ENCODE measurements at regions of chr19 and their contacts with region 1.

Region 1: GRCh38 chr19:19488875-19489690 is 26.3 kb downstream of the TSSK6 start:
- DNase-seq: peak; percentile 63 to 97 (median 94)
- ATAC-seq: peak; percentile 90
- H3K4me3 ChIP-seq: peak overlapping the region; percentile 22
- H3K4me3 Mint-ChIP-seq: peak overlapping the region; percentile 58 to 84 (median 78)
- H3K27ac ChIP-seq: peak overlapping the region; percentile 81
- H3K27ac Mint-ChIP-seq: peak overlapping the region; percentile 96 to 99 (median 99)
- H3K4me1 ChIP-seq: peaks cover 33 to 51% of the 10 kb centered on the region in 2 donors
- H3K4me1 Mint-ChIP-seq: peaks cover 27 to 61% (median 52%) of the 10 kb centered on the region in 7 donors
- H3K27me3 ChIP-seq: no peaks in the 10 kb centered on the region
- H3K27me3 Mint-ChIP-seq: no peaks in the 10 kb centered on the region

Region 2: DNA sequence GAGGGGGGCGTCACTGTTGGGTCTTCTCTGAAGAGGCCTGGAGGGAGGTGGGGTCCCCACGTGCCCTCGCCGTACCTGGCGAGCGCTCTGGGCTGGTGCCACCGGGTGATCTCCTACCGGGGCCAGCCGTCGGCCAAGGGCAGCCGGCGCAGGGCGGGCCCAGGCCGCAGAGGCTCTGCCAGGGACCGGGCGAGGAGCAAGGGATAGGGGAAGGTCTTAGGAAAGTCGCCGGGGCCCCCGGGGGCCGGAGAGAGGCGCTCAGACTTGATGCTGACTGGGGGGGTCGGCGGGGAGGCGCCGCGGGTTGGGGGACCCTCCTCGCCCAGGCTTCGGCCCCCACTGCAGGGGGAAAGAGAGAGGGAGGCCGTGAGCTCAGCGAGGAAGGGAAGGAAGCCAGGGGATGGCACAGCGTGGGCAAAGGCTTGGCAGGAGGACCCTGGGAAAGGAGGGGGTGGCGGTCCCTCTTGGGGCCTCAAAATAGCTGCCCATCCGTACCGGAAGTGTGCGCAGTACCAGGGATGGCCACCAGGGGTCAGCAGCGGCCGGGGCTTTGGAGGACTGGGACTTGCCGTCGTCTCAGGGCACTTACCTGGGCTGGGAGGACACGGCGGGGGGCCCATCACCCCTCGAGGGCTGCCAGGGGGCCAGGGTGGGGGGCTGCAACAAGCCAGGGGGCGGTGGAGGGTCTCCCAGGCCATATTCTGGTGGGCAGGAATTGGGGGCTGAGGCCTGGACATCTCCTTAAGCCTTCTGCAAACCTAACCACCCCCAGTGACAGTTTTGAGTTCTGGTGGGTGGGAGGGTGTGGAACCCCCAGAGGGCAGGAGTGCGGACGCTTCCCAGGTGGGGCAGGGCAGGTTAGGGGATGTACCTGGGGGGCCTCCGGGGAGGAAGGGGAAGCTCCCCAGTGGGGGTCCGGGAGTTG is 343.1 kb before region 1 on chr19:
- CTCF ChIA-PET with region 1: interaction called, 5 read pairs
- POLR2A ChIA-PET with region 1: no interaction called
- intact Hi-C with region 1: loop called in 1 of 2 experiments (anchors 1 kb)
- DNase-seq: peak; percentile 68 to 93 (median 80)
- ATAC-seq: peak; percentile 96
- H3K4me3 ChIP-seq: no peak overlapping the region
- H3K4me3 Mint-ChIP-seq: no peak overlapping the region
- H3K27ac ChIP-seq: no peak overlapping the region
- H3K27ac Mint-ChIP-seq: no peak overlapping the region
- H3K4me1 ChIP-seq: no peaks in the 10 kb centered on the region
- H3K4me1 Mint-ChIP-seq: no peaks in the 10 kb centered on the region
- H3K27me3 ChIP-seq: no peaks in the 10 kb centered on the region
- H3K27me3 Mint-ChIP-seq: no peaks in the 10 kb centered on the region

Region 3: DNA sequence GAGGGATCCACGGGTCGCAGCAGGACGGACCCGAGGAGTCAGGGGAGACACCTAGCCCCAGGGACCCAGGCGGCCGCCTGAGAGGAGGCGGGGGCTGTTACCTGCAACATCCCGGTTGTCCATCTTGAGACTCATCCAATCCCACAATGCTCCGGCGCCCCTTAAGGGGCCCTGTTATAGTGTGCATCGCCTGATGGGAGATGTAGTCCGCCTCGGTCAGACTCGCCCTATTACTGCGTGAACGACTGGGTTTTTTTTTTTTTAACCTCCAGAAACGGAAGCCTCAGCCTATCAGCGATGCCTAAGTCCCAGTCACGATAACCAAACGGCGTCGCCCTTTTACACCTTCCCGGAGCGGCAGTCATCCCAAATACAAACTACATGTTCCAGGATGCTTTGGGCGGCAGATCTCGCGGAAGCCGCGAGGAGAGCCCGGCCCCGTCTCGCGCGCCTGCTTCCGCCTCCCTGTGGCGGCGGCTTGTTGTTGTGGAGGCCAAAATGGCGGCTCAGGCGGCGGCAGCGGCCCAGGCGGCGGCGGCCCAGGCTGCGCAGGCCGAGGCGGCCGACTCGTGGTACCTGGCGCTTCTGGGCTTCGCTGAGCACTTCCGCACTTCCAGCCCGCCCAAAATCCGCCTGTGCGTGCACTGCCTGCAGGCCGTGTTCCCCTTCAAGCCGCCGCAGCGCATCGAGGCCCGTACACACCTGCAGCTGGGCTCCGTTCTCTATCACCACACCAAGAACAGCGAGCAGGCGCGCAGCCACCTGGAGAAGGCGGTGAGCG is 168.5 kb before region 1 on chr19 and contains the starts of genes MAU2 and SUGP1:
- CTCF ChIA-PET with region 1: interaction called, 4 read pairs
- POLR2A ChIA-PET with region 1: no interaction called
- intact Hi-C with region 1: loop called (anchors 1 kb)
- DNase-seq: peak; percentile 78 to 94 (median 91)
- ATAC-seq: peak; percentile 94
- H3K4me3 ChIP-seq: peak within 1 kb of the TSS; percentile 89
- H3K4me3 Mint-ChIP-seq: peak within 1 kb of the TSS; percentile 93 to 100 (median 98)
- H3K27ac ChIP-seq: peak within 1 kb of the TSS; percentile 95
- H3K27ac Mint-ChIP-seq: peak within 1 kb of the TSS; percentile 96 to 100 (median 99)
- H3K4me1 ChIP-seq: peaks cover 23 to 30% of the 10 kb centered on the region in 2 donors
- H3K4me1 Mint-ChIP-seq: peaks cover 20 to 66% (median 44%) of the 10 kb centered on the region in 7 donors
- H3K27me3 ChIP-seq: no peaks in the 10 kb centered on the region
- H3K27me3 Mint-ChIP-seq: no peaks in the 10 kb centered on the region
- total RNA-seq, gene MAU2: 93.7 to 170 (median 136) TPM
- total RNA-seq, gene SUGP1: 59.7 to 96.6 (median 77.5) TPM

Region 4: GRCh38 chr19:19385108-19385899 is 103.8 kb before region 1 on chr19:
- CTCF ChIA-PET with region 1: interaction called, 4 read pairs
- POLR2A ChIA-PET with region 1: interaction called, 7 read pairs
- intact Hi-C with region 1: loop called (anchors 1 kb)
- DNase-seq: peak; percentile 95 to 100 (median 99)
- ATAC-seq: peak; percentile 93
- H3K4me3 ChIP-seq: peak overlapping the region; percentile 81
- H3K4me3 Mint-ChIP-seq: peak overlapping the region; percentile 89 to 99 (median 94)
- H3K27ac ChIP-seq: peak overlapping the region; percentile 88
- H3K27ac Mint-ChIP-seq: peak overlapping the region; percentile 25 to 96 (median 93)
- H3K4me1 ChIP-seq: peaks cover 29 to 42% of the 10 kb centered on the region in 2 donors
- H3K4me1 Mint-ChIP-seq: peaks cover 36 to 46% (median 42%) of the 10 kb centered on the region in 7 donors
- H3K27me3 ChIP-seq: no peaks in the 10 kb centered on the region
- H3K27me3 Mint-ChIP-seq: no peaks in the 10 kb centered on the region

Region 5: DNA sequence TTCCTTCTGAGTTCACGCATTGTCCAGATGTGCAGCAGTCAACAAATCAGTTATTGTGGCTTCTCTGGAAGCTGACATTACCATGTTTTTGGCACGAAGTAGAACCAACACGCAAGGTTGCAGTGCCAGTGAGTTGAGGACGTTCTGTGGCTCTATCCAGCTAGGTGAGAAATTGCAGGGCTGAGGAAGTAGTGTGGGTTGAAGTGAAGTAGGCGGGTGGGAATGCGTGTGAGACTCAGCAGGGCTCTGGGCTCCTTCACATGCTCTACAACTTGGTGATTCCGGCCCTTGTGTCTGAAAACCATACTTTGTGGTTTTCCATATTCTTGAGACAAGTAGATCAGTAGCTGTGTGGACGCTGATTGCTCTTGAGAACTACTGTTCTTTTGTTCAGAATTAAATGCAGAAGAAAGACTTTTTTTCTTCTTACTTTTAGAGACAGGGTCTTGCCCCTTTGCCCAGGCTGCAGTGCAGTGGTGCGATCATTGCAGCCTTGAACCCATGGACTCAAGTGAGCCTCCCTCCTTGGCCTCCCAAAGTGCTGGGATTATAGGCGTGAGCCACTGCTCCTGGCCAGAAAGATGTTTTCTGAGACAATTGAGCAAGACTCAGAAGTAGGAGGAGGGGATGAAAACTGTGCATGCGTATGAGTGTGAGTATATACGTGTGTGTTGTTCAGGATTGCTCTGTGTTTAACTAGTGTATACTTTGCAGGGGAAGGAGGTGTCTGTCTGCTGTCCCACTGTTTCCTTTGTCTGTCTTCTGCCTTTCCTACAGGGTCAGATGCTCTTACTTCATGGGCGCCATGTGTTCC is 37.4 kb before region 1 on chr19:
- CTCF ChIA-PET with region 1: interaction called, 8 read pairs
- POLR2A ChIA-PET with region 1: interaction called, 10 read pairs
- intact Hi-C with region 1: loop called (anchors 2 kb)
- DNase-seq: peak in 4 of 9 donors; percentile 29 to 38 (median 31)
- ATAC-seq: peak; percentile 70
- H3K4me3 ChIP-seq: peak overlapping the region; percentile 19
- H3K4me3 Mint-ChIP-seq: peak overlapping the region; percentile 40 to 80 (median 63)
- H3K27ac ChIP-seq: peak overlapping the region; percentile 45
- H3K27ac Mint-ChIP-seq: peak overlapping the region; percentile 40 to 94 (median 89)
- H3K4me1 ChIP-seq: peaks cover 55 to 63% of the 10 kb centered on the region in 2 donors
- H3K4me1 Mint-ChIP-seq: peaks cover 33 to 74% (median 64%) of the 10 kb centered on the region in 7 donors
- H3K27me3 ChIP-seq: no peaks in the 10 kb centered on the region
- H3K27me3 Mint-ChIP-seq: no peaks in the 10 kb centered on the region

Region 6: GRCh38 chr19:19618219-19619051 is 129.4 kb after region 1 on chr19 and contains the start of gene PBX4:
- CTCF ChIA-PET with region 1: no interaction called
- POLR2A ChIA-PET with region 1: no interaction called
- intact Hi-C with region 1: no loop called
- DNase-seq: peak; percentile 97 to 99 (median 99)
- ATAC-seq: peak; percentile 99
- H3K4me3 ChIP-seq: peak within 1 kb of the TSS; percentile 86
- H3K4me3 Mint-ChIP-seq: peak within 1 kb of the TSS; percentile 79 to 99 (median 90)
- H3K27ac ChIP-seq: peak within 1 kb of the TSS; percentile 82
- H3K27ac Mint-ChIP-seq: peak within 1 kb of the TSS; percentile 80 to 98 (median 94)
- H3K4me1 ChIP-seq: peaks cover 16 to 23% of the 10 kb centered on the region in 2 donors
- H3K4me1 Mint-ChIP-seq: peaks cover 34 to 50% (median 45%) of the 10 kb centered on the region in 7 donors
- H3K27me3 ChIP-seq: no peaks in the 10 kb centered on the region
- H3K27me3 Mint-ChIP-seq: no peaks in the 10 kb centered on the region
- total RNA-seq, gene PBX4: 22.6 to 42.7 (median 42.0) TPM